HCT116 (cell line): ENCODE measurements at regions of chr7 and their contacts with region 1.

Region 1: GRCh38 chr7:158646766-158647447 is 57.7 kb downstream of the NCAPG2 start:
- DNase-seq: no peak
- ATAC-seq: peak; percentile 77
- H3K4me3 ChIP-seq: no peak overlapping the region
- H3K27ac ChIP-seq: no peak overlapping the region
- H3K4me1 ChIP-seq: no peaks in the 10 kb centered on the region; a peak in 2 of 4 replicates
- H3K27me3 ChIP-seq: no peaks in the 10 kb centered on the region
- CTCF ChIP-seq: peak; percentile 25 to 76 (median 68); a peak in 4 of 6 replicates
- POLR2A ChIP-seq: no peak
- RAD21 ChIP-seq: 0 out of 2 replicates have a peak, but pooled peaks have one; percentile 18

Region 2: DNA sequence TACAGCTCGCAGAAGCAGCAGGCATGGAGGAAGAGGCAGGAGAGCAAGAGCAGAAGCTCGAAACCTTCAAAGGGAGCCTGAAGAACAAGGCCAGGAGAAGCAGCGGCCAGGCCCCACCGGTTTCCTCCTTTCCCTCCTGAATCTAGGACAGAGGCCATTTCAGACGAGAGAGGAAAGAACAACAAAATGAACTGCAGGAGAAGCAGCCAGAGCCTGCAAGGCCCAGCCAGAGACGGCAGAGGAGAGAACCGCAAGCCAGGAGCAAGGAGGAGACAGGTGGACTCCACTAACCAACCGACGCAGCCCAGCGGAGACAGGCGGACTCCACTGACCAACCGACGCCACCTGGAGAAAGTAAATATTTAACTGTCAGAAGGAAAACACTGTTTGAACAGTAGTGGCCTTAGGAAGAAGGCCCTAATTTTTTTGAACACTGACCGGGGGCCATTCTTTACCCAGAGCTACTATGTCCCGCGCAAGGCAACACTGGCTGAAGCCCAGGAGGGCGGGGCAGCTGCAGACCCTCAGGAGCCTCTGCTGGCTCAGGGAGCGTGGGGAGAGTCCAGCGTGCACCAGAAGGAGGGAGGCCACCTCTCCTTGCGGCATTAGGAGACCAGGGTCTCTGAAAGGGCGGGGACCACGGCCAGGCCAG is 618.5 kb before region 1 on chr7:
- CTCF ChIA-PET with region 1: no interaction called
- POLR2A ChIA-PET with region 1: no interaction called
- RAD21 ChIA-PET with region 1: no interaction called
- intact Hi-C with region 1: no loop called
- DNase-seq: no peak
- ATAC-seq: no peak
- H3K4me3 ChIP-seq: no peak overlapping the region
- H3K27ac ChIP-seq: no peak overlapping the region
- H3K4me1 ChIP-seq: no peaks in the 10 kb centered on the region
- H3K27me3 ChIP-seq: no peaks in the 10 kb centered on the region
- CTCF ChIP-seq: no peak
- POLR2A ChIP-seq: no peak
- RAD21 ChIP-seq: no peak

Region 3: DNA sequence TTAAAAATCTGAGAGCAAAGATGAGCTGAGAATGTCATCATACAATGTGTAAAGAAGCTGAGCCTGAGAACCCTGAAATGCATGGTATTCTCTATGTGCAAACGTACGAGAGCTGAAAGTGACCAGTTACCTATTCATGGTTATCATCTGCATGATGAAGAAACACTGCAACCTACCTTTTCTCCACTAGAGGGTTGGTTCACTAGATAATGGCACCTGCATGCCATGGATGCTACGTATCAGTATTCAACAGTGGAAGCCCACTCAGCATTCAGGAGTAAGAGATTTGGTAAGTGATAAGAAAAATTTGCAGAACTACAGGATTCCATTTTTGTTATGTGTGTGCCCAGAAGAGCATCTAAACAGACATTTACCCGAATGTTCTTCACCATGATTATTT is 204.7 kb before region 1 on chr7:
- CTCF ChIA-PET with region 1: no interaction called
- POLR2A ChIA-PET with region 1: no interaction called
- RAD21 ChIA-PET with region 1: no interaction called
- intact Hi-C with region 1: loop called (anchors 2 kb)
- DNase-seq: peak; percentile 22
- ATAC-seq: peak; percentile 77
- H3K4me3 ChIP-seq: no peak overlapping the region
- H3K27ac ChIP-seq: no peak overlapping the region
- H3K4me1 ChIP-seq: no peaks in the 10 kb centered on the region
- H3K27me3 ChIP-seq: no peaks in the 10 kb centered on the region; the same call in 1 of the 2 replicates
- CTCF ChIP-seq: peak; percentile 24 to 68 (median 65); a peak in 5 of 6 replicates
- POLR2A ChIP-seq: no peak
- RAD21 ChIP-seq: peak; percentile 56

Region 4: GRCh38 chr7:158495786-158496185 is 151.1 kb before region 1 on chr7:
- CTCF ChIA-PET with region 1: no interaction called
- POLR2A ChIA-PET with region 1: no interaction called
- RAD21 ChIA-PET with region 1: no interaction called
- intact Hi-C with region 1: loop called (anchors 5 kb)
- DNase-seq: peak; percentile 8
- ATAC-seq: peak; percentile 87
- H3K4me3 ChIP-seq: no peak overlapping the region
- H3K27ac ChIP-seq: no peak overlapping the region
- H3K4me1 ChIP-seq: peaks cover 0 to 5% of the 10 kb centered on the region in 2 experiments; a peak in 1 of 4 replicates
- H3K27me3 ChIP-seq: no peaks in the 10 kb centered on the region
- CTCF ChIP-seq: peak; percentile 18 to 31 (median 21); a peak in 3 of 6 replicates
- POLR2A ChIP-seq: no peak
- RAD21 ChIP-seq: peak; percentile 73